HEK293 (cell line): ENCODE measurements at regions of chr12 and their contacts with region 1.

Region 1: GRCh38 chr12:22544038-22544979 is at the start of gene C2CD5:
- H3K4me3 ChIP-seq: peak within 1 kb of the TSS; percentile 86
- H3K27ac ChIP-seq: peak within 1 kb of the TSS; percentile 91
- H3K4me1 ChIP-seq: no peaks in the 10 kb centered on the region
- CTCF ChIP-seq: peak; percentile 87

Region 2: GRCh38 chr12:22573181-22573580 is 28.9 kb after region 1 on chr12:
- CTCF ChIA-PET with region 1: no interaction called
- POLR2A ChIA-PET with region 1: no interaction called
- H3K4me3 ChIP-seq: no peak overlapping the region
- H3K27ac ChIP-seq: no peak overlapping the region
- H3K4me1 ChIP-seq: no peaks in the 10 kb centered on the region
- CTCF ChIP-seq: no peak

Region 3: GRCh38 chr12:22624870-22625761 is 80.8 kb after region 1 on chr12 and contains the start of gene ETNK1:
- CTCF ChIA-PET with region 1: no interaction called
- POLR2A ChIA-PET with region 1: interaction called, 17 read pairs
- H3K4me3 ChIP-seq: peak within 1 kb of the TSS; percentile 81
- H3K27ac ChIP-seq: peak within 1 kb of the TSS; percentile 96
- H3K4me1 ChIP-seq: peaks cover 4% of the 10 kb centered on the region
- CTCF ChIP-seq: peak; percentile 78